ENCODE measurements at regions of chr17 and their contacts with region 1.

Region 1: GRCh38 chr17:58006924-58007780 is at the start of gene SRSF1:
- DNase-seq: peak; percentile 97
- H3K4me3 Mint-ChIP-seq: peak within 1 kb of the TSS; percentile 99
- H3K27ac Mint-ChIP-seq: peak within 1 kb of the TSS; percentile 99
- H3K4me1 Mint-ChIP-seq: peaks cover 61% of the 10 kb centered on the region
- H3K27me3 Mint-ChIP-seq: no peaks in the 10 kb centered on the region
- total RNA-seq, gene SRSF1: 491 and 498 TPM in 2 replicates

Region 2: GRCh38 chr17:56833809-56834379 is 1173.3 kb before region 1 on chr17 and contains the starts of genes C17orf67 and DGKE:
- intact Hi-C with region 1: loop called (anchors 10 kb)
- DNase-seq: peak; percentile 97
- H3K4me3 Mint-ChIP-seq: peak within 1 kb of the TSS; percentile 94
- H3K27ac Mint-ChIP-seq: peak within 1 kb of the TSS; percentile 96
- H3K4me1 Mint-ChIP-seq: peaks cover 65% of the 10 kb centered on the region
- H3K27me3 Mint-ChIP-seq: no peaks in the 10 kb centered on the region
- total RNA-seq, gene C17orf67: 3.1 TPM in 2 replicates
- total RNA-seq, gene DGKE: 31.8 and 34.3 TPM in 2 replicates

Region 3: DNA sequence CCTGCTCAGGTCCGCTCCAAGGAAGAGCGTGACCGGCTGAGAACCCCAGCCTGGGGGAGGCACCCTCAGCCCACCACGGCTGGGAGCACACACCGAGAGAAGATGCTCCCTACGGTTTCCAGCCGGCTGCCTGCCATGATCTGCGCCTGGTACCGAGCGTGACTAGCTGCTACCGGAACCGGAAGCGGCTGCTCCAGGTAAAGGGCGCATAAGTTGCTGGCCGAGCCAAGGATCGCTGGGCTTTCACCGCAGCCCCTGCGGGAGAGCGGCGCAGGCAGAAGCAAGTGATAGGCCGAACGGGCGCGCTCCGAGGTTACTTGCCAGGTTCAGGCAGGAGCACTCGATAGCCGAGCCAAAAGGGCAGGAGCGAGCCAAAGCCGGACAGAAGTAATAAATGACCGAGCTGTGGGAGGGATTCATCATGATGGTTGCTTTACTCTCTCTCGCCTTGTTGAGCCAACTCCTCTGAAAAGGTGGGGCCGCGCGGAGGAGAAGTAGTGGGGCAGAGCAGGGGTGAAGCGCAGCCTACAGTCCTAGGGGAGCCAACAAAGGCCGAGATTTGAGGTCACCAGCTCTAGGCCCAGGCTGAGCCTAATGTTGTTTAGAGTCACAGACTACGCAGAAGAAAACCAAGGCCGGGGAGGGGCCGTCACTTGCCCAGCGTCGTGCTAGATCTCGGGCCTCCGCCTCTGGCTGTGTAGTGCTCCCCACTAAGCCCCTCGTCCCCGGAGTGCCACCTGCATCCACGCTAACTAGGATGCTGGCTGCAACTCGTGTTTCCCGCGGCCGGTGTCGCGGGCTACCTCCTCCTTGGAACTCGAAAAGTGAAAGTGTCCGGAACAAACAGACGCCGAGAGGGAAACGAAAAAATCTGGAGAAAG is 157.0 kb before region 1 on chr17 and contains the start of gene MRPS23:
- intact Hi-C with region 1: loop called (anchors 1 kb)
- DNase-seq: peak; percentile 96
- H3K4me3 Mint-ChIP-seq: peak within 1 kb of the TSS; percentile 99
- H3K27ac Mint-ChIP-seq: peak within 1 kb of the TSS; percentile 99
- H3K4me1 Mint-ChIP-seq: peaks cover 18% of the 10 kb centered on the region
- H3K27me3 Mint-ChIP-seq: no peaks in the 10 kb centered on the region
- total RNA-seq, gene MRPS23: 79.6 and 87.0 TPM in 2 replicates

Region 4: DNA sequence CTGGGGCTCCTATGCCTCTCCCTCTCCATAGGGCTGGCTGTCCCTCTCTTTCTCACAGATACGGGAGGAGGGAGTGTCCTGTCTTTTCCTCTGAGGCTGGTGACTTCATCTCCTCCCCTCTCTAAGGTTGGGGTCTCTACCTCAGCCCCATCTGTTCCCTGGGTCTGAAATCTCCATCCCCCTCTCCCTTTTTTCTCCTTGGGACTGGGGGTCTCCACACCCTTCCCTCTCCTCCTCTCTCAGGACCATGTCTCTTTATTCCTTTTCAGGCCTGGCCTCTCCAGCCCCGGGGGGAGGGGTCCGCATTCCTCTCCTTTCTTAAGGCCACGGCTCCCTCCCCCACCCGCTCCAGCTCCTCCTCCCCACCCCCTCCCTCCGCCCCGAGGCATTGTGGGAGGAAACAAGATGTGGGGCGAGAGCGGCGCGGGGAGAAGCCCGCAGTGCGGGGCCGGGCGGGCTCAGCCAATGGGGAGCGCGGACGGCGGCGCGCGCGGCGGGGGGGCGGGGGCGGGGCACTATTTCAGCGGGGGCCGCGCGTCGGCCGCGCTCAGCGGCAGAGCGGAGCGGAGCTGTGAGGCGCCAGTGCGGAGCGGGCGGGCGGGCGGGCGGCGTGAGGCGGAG is 75.8 kb after region 1 on chr17 and contains the start of gene DYNLL2:
- intact Hi-C with region 1: loop called (anchors 1 kb)
- DNase-seq: peak; percentile 84
- H3K4me3 Mint-ChIP-seq: peak within 1 kb of the TSS; percentile 90
- H3K27ac Mint-ChIP-seq: peak within 1 kb of the TSS; percentile 78
- H3K4me1 Mint-ChIP-seq: peaks cover 32% of the 10 kb centered on the region
- H3K27me3 Mint-ChIP-seq: peaks cover 25% of the 10 kb centered on the region
- total RNA-seq, gene DYNLL2: 35.8 and 37.6 TPM in 2 replicates

Region 5: GRCh38 chr17:58172369-58173071 is 165.4 kb after region 1 on chr17:
- intact Hi-C with region 1: loop called (anchors 5 kb)
- DNase-seq: peak; percentile 38
- H3K4me3 Mint-ChIP-seq: no peak overlapping the region
- H3K27ac Mint-ChIP-seq: no peak overlapping the region
- H3K4me1 Mint-ChIP-seq: peaks cover 33% of the 10 kb centered on the region
- H3K27me3 Mint-ChIP-seq: peaks cover 6% of the 10 kb centered on the region

Region 6: DNA sequence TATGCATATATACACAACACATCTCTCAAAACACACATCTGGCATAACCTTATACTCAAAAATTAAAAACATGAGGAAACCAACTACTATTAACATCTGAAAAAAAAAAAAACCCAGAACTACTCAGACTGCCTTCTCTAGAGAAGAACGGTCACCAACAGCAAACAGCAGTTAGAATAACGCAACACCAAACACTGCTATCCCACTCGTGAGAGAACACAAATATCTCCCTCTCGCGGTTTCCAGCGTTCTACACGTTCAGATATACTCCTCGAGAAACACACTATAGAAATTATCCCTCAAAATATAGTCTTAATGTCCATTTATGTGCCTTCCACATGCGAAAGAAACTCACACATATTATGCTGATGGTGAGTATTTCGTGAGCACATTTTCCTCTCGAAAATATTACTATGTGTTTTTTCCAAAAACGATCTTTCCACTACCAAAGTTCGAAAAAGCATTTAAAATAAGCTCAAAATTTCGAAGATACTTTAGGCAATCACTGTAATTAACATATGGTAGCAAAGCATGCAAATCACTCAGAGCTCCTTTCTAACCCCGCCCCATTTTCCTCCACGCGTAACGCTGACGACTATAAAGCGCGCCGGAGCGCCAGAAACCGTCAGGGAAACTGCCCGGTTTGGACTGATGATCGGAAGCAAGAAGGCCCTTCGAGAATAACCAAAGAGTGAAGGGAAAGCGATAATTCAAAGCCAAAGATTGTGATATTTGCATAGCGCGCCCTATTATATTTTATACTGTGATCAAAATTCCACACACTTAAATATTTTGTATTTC is 624.6 kb after region 1 on chr17:
- intact Hi-C with region 1: loop called (anchors 2 kb)
- DNase-seq: peak; percentile 96
- H3K4me3 Mint-ChIP-seq: no peak overlapping the region
- H3K27ac Mint-ChIP-seq: no peak overlapping the region
- H3K4me1 Mint-ChIP-seq: peaks cover 4% of the 10 kb centered on the region
- H3K27me3 Mint-ChIP-seq: no peaks in the 10 kb centered on the region